B cell (primary cell): ENCODE measurements at regions of chr17 and their contacts with region 1.

Region 1: GRCh38 chr17:30124273-30124796 is 7.7 kb downstream of the NSRP1 start:
- DNase-seq: no peak
- ATAC-seq: no peak
- H3K4me3 ChIP-seq: no peak overlapping the region
- H3K4me3 Mint-ChIP-seq: no peak overlapping the region
- H3K27ac ChIP-seq: no peak overlapping the region
- H3K27ac Mint-ChIP-seq: no peak overlapping the region
- H3K4me1 ChIP-seq: peaks cover 0 to 6% of the 10 kb centered on the region in 2 donors
- H3K4me1 Mint-ChIP-seq: peaks cover 30% of the 10 kb centered on the region
- H3K27me3 ChIP-seq: no peaks in the 10 kb centered on the region
- H3K27me3 Mint-ChIP-seq: no peaks in the 10 kb centered on the region
- CTCF ChIP-seq: no peak

Region 2: DNA sequence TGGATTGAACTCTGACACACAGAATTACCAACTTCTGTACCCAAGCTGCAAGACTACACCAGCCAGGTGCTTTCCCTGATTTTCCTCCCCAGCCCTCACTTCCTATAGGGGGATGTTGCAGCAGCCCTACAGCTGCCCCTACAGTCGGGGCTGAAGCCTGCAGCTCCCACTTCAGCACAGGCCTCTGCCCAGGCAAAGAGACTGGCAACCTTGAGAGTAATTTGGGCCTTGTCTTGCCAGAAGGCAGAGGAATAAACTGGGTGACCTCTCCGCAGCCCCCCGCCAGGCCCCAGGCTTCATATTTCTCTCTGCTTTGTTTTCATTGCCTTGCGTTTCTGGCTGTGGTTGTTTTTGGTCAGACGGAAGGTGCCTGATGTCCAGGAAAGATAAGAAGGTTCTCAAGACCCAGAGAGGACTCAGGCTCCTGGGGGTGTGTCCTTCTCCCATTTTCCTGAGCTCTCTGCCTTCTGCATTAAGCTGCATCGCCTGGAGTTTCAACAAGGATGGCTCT is 79.2 kb after region 1 on chr17:
- CTCF ChIA-PET with region 1: no interaction called
- POLR2A ChIA-PET with region 1: no interaction called
- intact Hi-C with region 1: no loop called
- DNase-seq: no peak
- ATAC-seq: no peak
- H3K4me3 ChIP-seq: no peak overlapping the region
- H3K4me3 Mint-ChIP-seq: no peak overlapping the region
- H3K27ac ChIP-seq: no peak overlapping the region
- H3K27ac Mint-ChIP-seq: no peak overlapping the region
- H3K4me1 ChIP-seq: no peaks in the 10 kb centered on the region
- H3K4me1 Mint-ChIP-seq: no peaks in the 10 kb centered on the region
- H3K27me3 ChIP-seq: no peaks in the 10 kb centered on the region
- H3K27me3 Mint-ChIP-seq: peaks cover 5% of the 10 kb centered on the region
- CTCF ChIP-seq: no peak

Region 3: DNA sequence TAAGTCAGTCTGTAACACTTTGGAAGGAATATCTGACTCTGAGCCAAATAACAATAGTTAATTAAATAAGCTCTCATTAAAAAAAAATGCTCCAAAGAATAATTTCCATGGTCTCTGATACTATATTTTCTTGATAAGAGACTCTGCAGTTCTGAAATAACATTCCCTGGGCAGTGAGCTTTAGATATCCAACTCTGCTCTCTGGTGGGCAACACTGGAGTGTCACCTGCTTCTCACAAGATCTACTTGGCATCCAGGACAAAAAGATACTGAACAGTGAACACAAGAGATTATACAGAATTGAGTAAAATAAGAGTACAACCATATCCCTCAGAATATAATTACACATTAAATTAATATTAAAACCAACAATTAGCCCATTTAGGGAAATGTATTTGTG is 153.7 kb after region 1 on chr17:
- CTCF ChIA-PET with region 1: interaction called, 6 read pairs
- POLR2A ChIA-PET with region 1: no interaction called
- intact Hi-C with region 1: loop called (anchors 1 kb)
- DNase-seq: peak; percentile 25
- ATAC-seq: no peak
- H3K4me3 ChIP-seq: no peak overlapping the region
- H3K4me3 Mint-ChIP-seq: no peak overlapping the region
- H3K27ac ChIP-seq: no peak overlapping the region
- H3K27ac Mint-ChIP-seq: no peak overlapping the region
- H3K4me1 ChIP-seq: no peaks in the 10 kb centered on the region
- H3K4me1 Mint-ChIP-seq: no peaks in the 10 kb centered on the region
- H3K27me3 ChIP-seq: no peaks in the 10 kb centered on the region
- H3K27me3 Mint-ChIP-seq: no peaks in the 10 kb centered on the region
- CTCF ChIP-seq: peak; percentile 35

Region 4: GRCh38 chr17:30336369-30337171 is 212.2 kb after region 1 on chr17:
- CTCF ChIA-PET with region 1: interaction called, 54 read pairs
- POLR2A ChIA-PET with region 1: no interaction called
- intact Hi-C with region 1: loop called (anchors 1 kb)
- DNase-seq: peak; percentile 71
- ATAC-seq: peak; percentile 42
- H3K4me3 ChIP-seq: no peak overlapping the region
- H3K4me3 Mint-ChIP-seq: no peak overlapping the region
- H3K27ac ChIP-seq: no peak overlapping the region
- H3K27ac Mint-ChIP-seq: no peak overlapping the region
- H3K4me1 ChIP-seq: peaks cover 5 to 6% of the 10 kb centered on the region in 2 donors
- H3K4me1 Mint-ChIP-seq: peaks cover 11% of the 10 kb centered on the region
- H3K27me3 ChIP-seq: no peaks in the 10 kb centered on the region
- H3K27me3 Mint-ChIP-seq: peaks cover 7% of the 10 kb centered on the region
- CTCF ChIP-seq: peak; percentile 89